MCF 10A (cell line): ENCODE measurements at regions of chr13 and their contacts with region 1.

Region 1: GRCh38 chr13:40666045-40666904 is at the start of gene FOXO1:
- DNase-seq: peak; percentile 79
- H3K4me3 Mint-ChIP-seq: peak within 1 kb of the TSS; percentile 90
- H3K27ac Mint-ChIP-seq: peak within 1 kb of the TSS; percentile 79
- H3K4me1 Mint-ChIP-seq: peaks cover 12% of the 10 kb centered on the region
- H3K27me3 Mint-ChIP-seq: no peaks in the 10 kb centered on the region
- CTCF ChIP-seq: no peak
- total RNA-seq, gene FOXO1: 37.1 and 37.7 TPM in 2 replicates

Region 2: GRCh38 chr13:40060296-40061007 is 605.8 kb before region 1 on chr13:
- CTCF ChIA-PET with region 1: no interaction called
- POLR2A ChIA-PET with region 1: interaction called, 54 read pairs
- intact Hi-C with region 1: no loop called
- DNase-seq: peak; percentile 99
- H3K4me3 Mint-ChIP-seq: peak overlapping the region; percentile 67
- H3K27ac Mint-ChIP-seq: peak overlapping the region; percentile 96
- H3K4me1 Mint-ChIP-seq: peaks cover 74% of the 10 kb centered on the region
- H3K27me3 Mint-ChIP-seq: no peaks in the 10 kb centered on the region
- CTCF ChIP-seq: no peak

Region 3: GRCh38 chr13:40116008-40116407 is 550.3 kb before region 1 on chr13:
- CTCF ChIA-PET with region 1: interaction called, 3 read pairs
- POLR2A ChIA-PET with region 1: interaction called, 15 read pairs
- intact Hi-C with region 1: no loop called
- DNase-seq: peak; percentile 96
- H3K4me3 Mint-ChIP-seq: no peak overlapping the region
- H3K27ac Mint-ChIP-seq: peak overlapping the region; percentile 99
- H3K4me1 Mint-ChIP-seq: peaks cover 69% of the 10 kb centered on the region
- H3K27me3 Mint-ChIP-seq: no peaks in the 10 kb centered on the region
- CTCF ChIP-seq: no peak

Region 4: DNA sequence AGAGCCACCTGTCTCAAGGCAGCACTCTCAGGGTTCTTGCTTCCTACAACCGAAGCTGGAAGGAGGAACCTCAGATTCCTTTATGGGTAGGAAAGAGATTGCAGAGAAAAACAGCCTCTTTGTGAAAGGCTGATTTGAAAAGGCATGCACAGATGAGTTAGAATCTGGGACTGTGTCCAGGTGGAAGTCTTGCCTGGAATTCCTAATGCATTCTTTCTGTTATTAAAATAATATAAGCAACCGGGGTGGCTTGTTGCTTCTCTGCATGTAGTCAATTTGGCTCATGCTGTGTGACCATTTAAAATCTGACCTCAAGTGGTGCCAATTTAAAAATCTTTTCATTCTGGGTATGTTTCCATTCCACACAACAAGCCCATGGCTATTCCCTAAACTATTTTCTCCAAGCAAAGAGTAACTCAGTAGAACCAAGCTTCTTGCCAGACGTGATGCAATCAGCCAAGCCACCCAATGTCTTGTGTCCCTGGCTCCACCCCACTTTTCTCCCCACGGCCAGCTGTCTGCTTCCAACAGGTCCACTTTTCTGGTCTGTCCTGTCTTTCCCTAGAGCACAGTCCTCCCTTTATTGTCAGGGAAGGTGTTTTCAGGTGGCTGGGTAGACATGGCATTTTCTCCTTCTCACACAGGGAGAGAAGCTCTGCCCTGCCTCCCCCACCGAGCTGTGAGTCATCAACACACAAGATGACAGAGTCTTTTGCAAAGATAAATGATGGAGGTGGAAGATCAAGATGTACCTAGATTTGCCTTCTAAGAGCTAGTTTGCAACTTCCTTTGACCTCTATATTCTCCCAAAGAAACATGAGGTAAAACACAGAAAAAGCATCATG is 394.1 kb before region 1 on chr13:
- CTCF ChIA-PET with region 1: no interaction called
- POLR2A ChIA-PET with region 1: interaction called, 16 read pairs
- intact Hi-C with region 1: no loop called
- DNase-seq: peak; percentile 87
- H3K4me3 Mint-ChIP-seq: peak overlapping the region; percentile 15
- H3K27ac Mint-ChIP-seq: peak overlapping the region; percentile 32
- H3K4me1 Mint-ChIP-seq: peaks cover 39% of the 10 kb centered on the region
- H3K27me3 Mint-ChIP-seq: no peaks in the 10 kb centered on the region
- CTCF ChIP-seq: no peak

Region 5: GRCh38 chr13:40477623-40478608 is 188.4 kb before region 1 on chr13:
- CTCF ChIA-PET with region 1: no interaction called
- POLR2A ChIA-PET with region 1: no interaction called
- intact Hi-C with region 1: loop called (anchors 10 kb)
- DNase-seq: no peak
- H3K4me3 Mint-ChIP-seq: no peak overlapping the region
- H3K27ac Mint-ChIP-seq: no peak overlapping the region
- H3K4me1 Mint-ChIP-seq: peaks cover 13% of the 10 kb centered on the region
- H3K27me3 Mint-ChIP-seq: no peaks in the 10 kb centered on the region
- CTCF ChIP-seq: no peak

Region 6: DNA sequence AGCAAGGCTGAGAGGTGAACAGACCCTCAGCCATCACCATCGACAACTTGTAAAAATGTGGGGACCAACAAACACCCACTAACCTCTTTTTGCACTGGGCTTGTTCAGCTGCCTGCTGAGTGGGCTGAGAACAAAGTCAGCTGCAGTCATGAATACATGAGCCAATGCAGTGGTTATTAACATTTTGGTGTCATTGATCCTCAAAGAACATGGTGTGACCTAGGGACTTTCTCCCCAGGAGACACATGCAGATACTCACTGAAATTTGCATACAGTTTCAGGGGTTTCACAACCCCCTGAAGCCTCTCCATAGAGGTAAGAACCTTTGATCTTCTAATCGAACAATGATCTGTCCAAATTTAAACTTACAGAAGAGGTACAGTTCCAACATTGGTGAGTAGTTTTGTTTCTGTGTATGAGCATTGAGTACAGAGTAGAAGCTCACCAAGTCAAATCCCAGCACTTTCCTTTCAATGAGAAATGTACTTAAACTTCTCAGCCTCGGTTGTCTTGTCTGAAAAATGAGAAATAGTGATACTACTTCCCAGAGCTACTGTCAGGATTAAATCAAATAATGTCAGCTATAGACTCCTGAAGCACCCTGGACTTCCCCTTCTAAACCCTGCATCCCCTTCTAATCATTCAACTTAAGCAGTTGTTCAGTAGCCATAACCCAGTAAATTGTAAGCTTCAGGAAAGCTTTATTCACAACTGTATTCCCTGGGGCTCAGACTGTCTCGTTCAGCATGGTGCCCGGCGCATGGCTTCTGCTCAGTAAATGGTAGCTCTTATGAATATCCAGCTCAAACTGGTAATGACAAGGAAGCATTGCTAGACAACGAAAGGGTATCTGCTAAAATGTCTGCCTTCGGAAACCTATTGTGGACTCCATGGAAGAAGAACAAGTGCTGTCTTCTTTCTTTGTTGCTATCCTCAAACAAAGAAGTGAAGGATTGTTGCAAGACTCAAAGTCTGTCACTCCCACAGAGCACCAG is 148.5 kb before region 1 on chr13:
- CTCF ChIA-PET with region 1: no interaction called
- POLR2A ChIA-PET with region 1: no interaction called
- intact Hi-C with region 1: no loop called
- DNase-seq: no peak
- H3K4me3 Mint-ChIP-seq: no peak overlapping the region
- H3K27ac Mint-ChIP-seq: peak overlapping the region; percentile 40
- H3K4me1 Mint-ChIP-seq: peaks cover 25% of the 10 kb centered on the region
- H3K27me3 Mint-ChIP-seq: no peaks in the 10 kb centered on the region
- CTCF ChIP-seq: no peak